A673 (cell line): ENCODE measurements at regions of chr3 and their contacts with region 1.

Region 1: DNA sequence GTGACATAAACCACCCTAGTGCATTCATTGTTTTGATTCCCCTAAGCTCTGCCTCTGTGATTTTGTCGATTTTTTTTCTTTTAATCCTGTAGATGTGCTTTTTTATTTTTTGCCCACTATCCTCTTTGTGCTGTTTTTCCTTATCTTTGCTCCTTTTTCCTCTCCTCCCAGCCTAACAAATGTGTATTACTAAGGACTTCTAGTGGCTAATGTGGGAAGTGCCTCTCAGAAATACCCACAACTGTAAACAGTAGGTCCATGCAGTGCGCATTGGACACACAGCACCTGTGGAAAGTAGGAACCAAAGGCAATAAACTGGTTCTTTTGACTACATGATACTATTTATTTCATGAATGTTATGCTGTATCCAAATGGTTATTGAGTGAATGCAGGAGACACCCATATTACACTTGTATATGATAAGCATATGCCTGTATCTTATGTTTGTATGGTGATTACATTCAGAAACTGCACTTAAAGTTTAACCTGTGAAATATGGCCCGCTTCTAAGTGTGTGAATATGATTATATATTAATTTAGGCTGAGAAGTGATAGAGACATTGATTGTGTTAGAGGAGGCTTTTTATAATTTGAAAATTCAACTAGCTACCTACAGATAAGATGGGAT is 147.8 kb downstream of the PLCL2 start:
- DNase-seq: peak; percentile 16
- H3K4me3 ChIP-seq: no peak overlapping the region
- H3K27ac ChIP-seq: no peak overlapping the region
- H3K4me1 ChIP-seq: no peaks in the 10 kb centered on the region
- H3K27me3 ChIP-seq: peaks cover 8% of the 10 kb centered on the region
- CTCF ChIP-seq: peak; percentile 55

Region 2: DNA sequence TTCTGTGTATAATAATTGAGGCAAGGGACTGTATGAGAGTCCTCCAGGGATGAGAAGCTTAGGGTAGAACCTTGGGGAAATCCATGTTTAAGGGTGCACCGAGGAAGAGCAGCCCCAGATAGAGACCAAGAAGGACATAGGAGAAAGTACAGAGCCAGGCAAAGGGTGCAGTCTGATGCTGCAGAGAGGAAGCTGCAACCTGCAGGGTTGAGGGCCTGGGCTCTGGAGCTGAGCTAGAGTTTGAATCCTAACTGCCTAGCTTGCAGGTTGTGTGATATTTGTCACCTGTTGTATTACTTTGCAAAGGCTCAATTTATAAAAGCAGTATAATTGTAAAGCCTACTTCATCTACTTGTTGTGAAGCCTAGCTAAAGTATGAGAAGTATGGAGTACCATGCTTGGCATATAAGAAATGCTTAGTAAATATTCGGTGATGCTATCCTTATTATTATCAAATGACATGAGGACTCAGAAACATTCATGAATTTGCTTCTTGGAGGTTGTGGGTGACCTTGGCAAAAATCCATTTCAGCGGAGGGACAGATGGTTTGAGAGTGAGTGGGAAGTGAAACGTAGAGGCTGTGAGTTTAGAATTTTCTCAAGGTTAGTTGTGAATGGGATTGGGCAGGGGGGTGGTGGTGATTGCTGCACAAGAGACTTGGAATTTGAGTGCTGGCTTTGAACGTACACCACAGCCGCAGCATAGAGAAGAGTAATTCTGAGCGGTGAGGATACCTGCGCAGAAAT is 104.0 kb before region 1 on chr3:
- CTCF ChIA-PET with region 1: interaction called, 11 read pairs
- POLR2A ChIA-PET with region 1: no interaction called
- intact Hi-C with region 1: no loop called
- DNase-seq: no peak
- H3K4me3 ChIP-seq: no peak overlapping the region
- H3K27ac ChIP-seq: no peak overlapping the region
- H3K4me1 ChIP-seq: no peaks in the 10 kb centered on the region
- H3K27me3 ChIP-seq: peaks cover 9% of the 10 kb centered on the region
- CTCF ChIP-seq: no peak

Region 3: GRCh38 chr3:17233398-17233800 is 200.9 kb after region 1 on chr3:
- CTCF ChIA-PET with region 1: no interaction called
- POLR2A ChIA-PET with region 1: no interaction called
- intact Hi-C with region 1: loop called (anchors 10 kb)
- DNase-seq: peak; percentile 66
- H3K4me3 ChIP-seq: no peak overlapping the region
- H3K27ac ChIP-seq: no peak overlapping the region
- H3K4me1 ChIP-seq: no peaks in the 10 kb centered on the region
- H3K27me3 ChIP-seq: no peaks in the 10 kb centered on the region
- CTCF ChIP-seq: peak; percentile 75